Activated naive CD4-positive, alpha-beta T cell treated with anti-CD3 and anti-CD28 coated beads for 36 hours (primary cell): ENCODE measurements at regions of chr17 and their contacts with region 1.

Region 1: GRCh38 chr17:14203388-14203787 is 33.3 kb downstream of the CDRT15 start:
- DNase-seq: peak; percentile 67
- H3K4me3 Mint-ChIP-seq: no peak overlapping the region
- H3K27ac Mint-ChIP-seq: peak overlapping the region; percentile 94
- H3K4me1 Mint-ChIP-seq: peaks cover 85% of the 10 kb centered on the region
- H3K27me3 Mint-ChIP-seq: no peaks in the 10 kb centered on the region

Region 2: GRCh38 chr17:14069251-14070021 is 134.0 kb before region 1 on chr17 and contains the start of gene COX10:
- CTCF ChIA-PET with region 1: interaction called, 4 read pairs
- intact Hi-C with region 1: loop called (anchors 1 kb)
- DNase-seq: peak; percentile 88
- H3K4me3 Mint-ChIP-seq: peak within 1 kb of the TSS; percentile 94
- H3K27ac Mint-ChIP-seq: peak within 1 kb of the TSS; percentile 87
- H3K4me1 Mint-ChIP-seq: peaks cover 67% of the 10 kb centered on the region
- H3K27me3 Mint-ChIP-seq: no peaks in the 10 kb centered on the region
- total RNA-seq, gene COX10: 29.9 to 30.6 TPM

Region 3: GRCh38 chr17:14135906-14136590 is 67.3 kb before region 1 on chr17:
- CTCF ChIA-PET with region 1: no interaction called
- intact Hi-C with region 1: loop called (anchors 1 kb)
- DNase-seq: no peak
- H3K4me3 Mint-ChIP-seq: peak overlapping the region; percentile 38
- H3K27ac Mint-ChIP-seq: peak overlapping the region; percentile 91
- H3K4me1 Mint-ChIP-seq: peaks cover 31% of the 10 kb centered on the region
- H3K27me3 Mint-ChIP-seq: no peaks in the 10 kb centered on the region

Region 4: DNA sequence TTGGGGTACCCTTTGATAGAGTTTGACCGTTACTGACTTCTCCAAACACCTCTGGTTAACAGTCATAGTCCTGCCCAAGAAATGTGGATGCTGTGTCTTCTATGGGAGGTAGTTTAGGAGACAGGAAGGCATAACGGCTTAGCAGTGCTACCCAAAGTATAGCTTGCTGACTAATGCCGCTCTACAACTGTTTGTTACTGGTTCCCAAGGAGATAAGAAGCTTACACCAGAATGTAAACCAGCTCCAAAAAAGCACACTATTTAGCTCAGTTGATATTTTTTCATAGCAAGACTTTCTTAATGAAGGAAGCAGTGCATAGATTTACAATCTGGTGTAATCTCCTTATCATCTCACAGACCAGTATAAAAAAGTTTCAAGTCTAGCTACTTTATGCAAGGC is 193.2 kb after region 1 on chr17:
- CTCF ChIA-PET with region 1: no interaction called
- intact Hi-C with region 1: loop called (anchors 5 kb)
- DNase-seq: no peak
- H3K4me3 Mint-ChIP-seq: no peak overlapping the region
- H3K27ac Mint-ChIP-seq: no peak overlapping the region
- H3K4me1 Mint-ChIP-seq: peaks cover 2% of the 10 kb centered on the region
- H3K27me3 Mint-ChIP-seq: no peaks in the 10 kb centered on the region

Region 5: GRCh38 chr17:14553855-14554254 is 350.5 kb after region 1 on chr17:
- CTCF ChIA-PET with region 1: no interaction called
- intact Hi-C with region 1: loop called (anchors 10 kb)
- DNase-seq: no peak
- H3K4me3 Mint-ChIP-seq: no peak overlapping the region
- H3K27ac Mint-ChIP-seq: no peak overlapping the region
- H3K4me1 Mint-ChIP-seq: no peaks in the 10 kb centered on the region
- H3K27me3 Mint-ChIP-seq: no peaks in the 10 kb centered on the region